Activated B cell treated with CpG ODN at 0.5 μM for 24 hours (primary cell): ENCODE measurements at regions of chr10 and their contacts with region 1.

Region 1: DNA sequence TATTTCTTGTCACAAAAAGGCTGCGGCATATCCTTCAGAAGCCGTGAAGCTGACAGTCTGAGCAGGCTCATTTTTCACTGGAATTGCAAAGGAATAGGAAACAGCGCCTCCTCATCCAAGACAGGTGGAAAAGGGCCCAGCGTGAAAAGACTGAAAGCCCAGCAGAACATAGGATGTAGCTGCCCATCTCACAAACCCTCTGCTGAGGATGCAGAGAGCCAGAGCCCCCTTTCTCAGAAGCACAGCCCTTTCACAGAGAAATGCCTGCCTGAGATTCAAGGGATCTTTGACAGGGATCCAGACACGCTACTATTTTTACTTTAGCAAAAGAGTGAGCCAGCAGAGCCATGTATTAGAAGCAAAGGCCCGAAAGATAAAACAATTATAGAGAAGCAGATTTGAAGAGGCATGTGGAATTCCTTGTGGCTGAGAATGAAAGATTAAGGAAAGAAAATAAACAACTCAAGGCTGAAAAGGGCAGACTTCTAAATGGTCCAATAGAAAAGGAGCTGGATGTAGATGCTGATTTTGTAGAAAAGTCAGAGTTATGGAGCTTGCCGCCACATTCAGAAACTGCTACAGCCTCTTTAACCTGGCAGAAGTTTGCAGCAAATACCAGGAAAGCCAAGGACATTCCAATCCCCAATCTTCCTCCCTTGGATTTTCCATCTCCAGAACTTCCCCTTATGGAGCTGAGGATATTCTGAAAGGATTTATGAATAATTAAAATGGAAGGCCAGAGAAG is 36.9 kb downstream of the GDI2 start:
- DNase-seq: no peak
- ATAC-seq: no peak
- H3K4me3 Mint-ChIP-seq: no peak overlapping the region
- H3K27ac Mint-ChIP-seq: peak overlapping the region; percentile 85
- H3K4me1 Mint-ChIP-seq: peaks cover 54% of the 10 kb centered on the region
- H3K27me3 Mint-ChIP-seq: no peaks in the 10 kb centered on the region
- CTCF ChIP-seq: no peak

Region 2: GRCh38 chr10:5788969-5789368 is 12.7 kb after region 1 on chr10:
- CTCF ChIA-PET with region 1: no interaction called
- POLR2A ChIA-PET with region 1: no interaction called
- intact Hi-C with region 1: loop called (anchors 2 kb)
- DNase-seq: no peak
- ATAC-seq: no peak
- H3K4me3 Mint-ChIP-seq: no peak overlapping the region
- H3K27ac Mint-ChIP-seq: no peak overlapping the region
- H3K4me1 Mint-ChIP-seq: peaks cover 5% of the 10 kb centered on the region
- H3K27me3 Mint-ChIP-seq: no peaks in the 10 kb centered on the region
- CTCF ChIP-seq: no peak

Region 3: GRCh38 chr10:6086375-6087233 is 310.3 kb after region 1 on chr10:
- CTCF ChIA-PET with region 1: no interaction called
- POLR2A ChIA-PET with region 1: no interaction called
- intact Hi-C with region 1: no loop called
- DNase-seq: peak; percentile 77
- ATAC-seq: peak; percentile 45
- H3K4me3 Mint-ChIP-seq: peak overlapping the region; percentile 62
- H3K27ac Mint-ChIP-seq: peak overlapping the region; percentile 87
- H3K4me1 Mint-ChIP-seq: peaks cover 56% of the 10 kb centered on the region
- H3K27me3 Mint-ChIP-seq: no peaks in the 10 kb centered on the region
- CTCF ChIP-seq: no peak